ENCODE measurements at regions of chr2 and their contacts with region 1.

Region 1: GRCh38 chr2:15577071-15577735 is 14.5 kb upstream of the DDX1 start:
- DNase-seq: peak; percentile 67 to 85 (median 81)
- ATAC-seq: peak; percentile 98
- H3K4me3 ChIP-seq: no peak overlapping the region
- H3K4me3 Mint-ChIP-seq: no peak overlapping the region
- H3K27ac ChIP-seq: no peak overlapping the region
- H3K27ac Mint-ChIP-seq: no peak overlapping the region
- H3K4me1 ChIP-seq: no peaks in the 10 kb centered on the region
- H3K4me1 Mint-ChIP-seq: no peaks in the 10 kb centered on the region
- H3K27me3 ChIP-seq: no peaks in the 10 kb centered on the region
- H3K27me3 Mint-ChIP-seq: peaks cover 0 to 5% (median 0%) of the 10 kb centered on the region in 5 donors

Region 2: DNA sequence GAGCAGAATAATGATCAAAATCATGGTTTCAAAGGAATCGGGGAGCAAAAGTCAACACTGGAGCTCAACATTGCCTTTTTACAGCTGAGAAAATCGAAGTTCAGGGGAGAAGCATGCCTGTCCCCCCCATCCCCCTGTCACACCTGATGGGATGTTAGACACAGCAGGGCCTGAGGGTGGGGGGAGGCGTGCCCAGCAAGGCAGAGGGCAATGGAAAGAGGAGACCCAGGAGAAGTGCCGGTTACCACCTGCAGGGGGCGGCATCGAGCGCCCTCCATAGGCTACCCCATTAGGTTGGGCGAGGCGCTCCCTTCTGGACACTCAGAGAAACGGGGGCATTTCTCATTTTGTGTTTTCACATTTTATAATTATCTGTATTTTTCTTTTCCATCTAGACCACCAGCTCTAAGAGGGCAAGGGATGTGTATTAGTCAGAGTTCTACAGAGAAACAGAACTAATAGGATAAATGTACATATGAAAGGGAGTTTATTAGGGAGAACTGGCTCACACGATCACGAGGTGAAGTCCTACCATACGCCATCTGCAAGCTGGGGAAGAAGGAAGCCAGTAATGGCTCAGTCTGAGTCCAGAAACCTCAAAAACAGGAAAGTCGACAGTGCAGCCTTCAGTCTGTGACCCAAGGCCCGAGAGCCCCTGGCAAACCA is 673.4 kb before region 1 on chr2:
- CTCF ChIA-PET with region 1: no interaction called
- POLR2A ChIA-PET with region 1: no interaction called
- intact Hi-C with region 1: loop called in 1 of 2 experiments (anchors 1 kb)
- DNase-seq: peak in 4 of 9 donors; percentile 2 to 64 (median 7)
- ATAC-seq: peak; percentile 72
- H3K4me3 ChIP-seq: no peak overlapping the region
- H3K4me3 Mint-ChIP-seq: no peak overlapping the region
- H3K27ac ChIP-seq: no peak overlapping the region
- H3K27ac Mint-ChIP-seq: no peak overlapping the region
- H3K4me1 ChIP-seq: no peaks in the 10 kb centered on the region
- H3K4me1 Mint-ChIP-seq: no peaks in the 10 kb centered on the region
- H3K27me3 ChIP-seq: no peaks in the 10 kb centered on the region
- H3K27me3 Mint-ChIP-seq: peaks cover 0 to 13% (median 11%) of the 10 kb centered on the region in 5 donors

Region 3: DNA sequence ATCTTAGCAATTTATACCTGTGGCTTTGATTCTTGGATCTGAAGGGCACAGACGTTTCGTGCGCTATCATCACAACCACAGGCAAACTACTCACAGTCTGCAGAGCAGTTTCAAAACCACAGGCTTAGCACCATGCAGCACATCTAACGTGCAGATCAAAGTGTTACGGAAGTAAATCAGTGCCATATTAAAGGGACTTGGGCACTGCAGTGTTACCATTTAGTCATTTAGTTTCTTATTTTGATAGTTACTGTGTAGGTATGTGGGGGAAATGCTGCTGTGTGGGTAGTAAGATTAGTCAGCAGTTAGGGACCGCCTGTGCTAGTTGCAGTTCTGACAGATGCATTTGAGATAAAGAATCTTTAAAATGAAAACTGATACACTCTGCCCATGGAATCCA is 400.1 kb before region 1 on chr2:
- CTCF ChIA-PET with region 1: no interaction called
- POLR2A ChIA-PET with region 1: no interaction called
- intact Hi-C with region 1: loop called in 1 of 2 experiments (anchors 5 kb)
- DNase-seq: peak in 8 of 9 donors; percentile 40 to 78 (median 62)
- ATAC-seq: peak; percentile 93
- H3K4me3 ChIP-seq: no peak overlapping the region
- H3K4me3 Mint-ChIP-seq: peak overlapping the region in 9 of 10 donors; percentile 8 to 53 (median 40)
- H3K27ac ChIP-seq: no peak overlapping the region
- H3K27ac Mint-ChIP-seq: peak overlapping the region; percentile 26 to 83 (median 54)
- H3K4me1 ChIP-seq: peaks cover 0 to 25% of the 10 kb centered on the region in 2 donors
- H3K4me1 Mint-ChIP-seq: peaks cover 19 to 46% (median 36%) of the 10 kb centered on the region in 7 donors
- H3K27me3 ChIP-seq: no peaks in the 10 kb centered on the region
- H3K27me3 Mint-ChIP-seq: no peaks in the 10 kb centered on the region

Region 4: DNA sequence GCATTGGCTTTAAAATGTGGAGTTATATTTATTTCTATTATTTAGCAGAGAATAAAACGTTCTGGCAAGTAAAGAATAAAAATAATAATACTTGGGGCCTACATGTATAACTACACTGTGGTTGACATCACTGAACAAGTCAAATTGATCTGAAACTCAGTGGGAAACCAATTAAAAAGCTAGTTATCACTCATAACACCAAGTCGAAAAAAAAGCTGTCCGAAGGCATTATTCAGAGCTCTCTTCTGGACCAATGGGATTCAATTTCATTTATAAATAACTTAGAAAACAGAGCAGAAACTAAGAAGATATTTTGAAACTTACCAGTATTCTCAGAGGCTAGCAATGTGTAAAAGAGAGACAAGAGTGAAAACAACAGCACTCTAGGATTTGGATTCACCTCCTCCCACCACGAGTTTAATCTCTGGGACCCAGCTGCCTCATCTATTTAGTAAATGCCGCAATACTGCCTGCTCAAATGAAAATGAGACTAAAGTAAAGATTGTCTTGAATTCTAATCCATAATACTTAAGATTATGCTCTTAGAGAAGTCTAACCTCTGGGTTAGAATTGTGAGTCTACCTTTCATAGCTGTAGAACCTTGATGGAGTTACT is 144.5 kb before region 1 on chr2:
- CTCF ChIA-PET with region 1: no interaction called
- POLR2A ChIA-PET with region 1: no interaction called
- intact Hi-C with region 1: loop called in 1 of 2 experiments (anchors 5 kb)
- DNase-seq: no peak
- ATAC-seq: no peak
- H3K4me3 ChIP-seq: no peak overlapping the region
- H3K4me3 Mint-ChIP-seq: no peak overlapping the region
- H3K27ac ChIP-seq: no peak overlapping the region
- H3K27ac Mint-ChIP-seq: no peak overlapping the region
- H3K4me1 ChIP-seq: no peaks in the 10 kb centered on the region
- H3K4me1 Mint-ChIP-seq: peaks cover 0 to 12% (median 2%) of the 10 kb centered on the region in 7 donors
- H3K27me3 ChIP-seq: no peaks in the 10 kb centered on the region
- H3K27me3 Mint-ChIP-seq: no peaks in the 10 kb centered on the region

Region 5: DNA sequence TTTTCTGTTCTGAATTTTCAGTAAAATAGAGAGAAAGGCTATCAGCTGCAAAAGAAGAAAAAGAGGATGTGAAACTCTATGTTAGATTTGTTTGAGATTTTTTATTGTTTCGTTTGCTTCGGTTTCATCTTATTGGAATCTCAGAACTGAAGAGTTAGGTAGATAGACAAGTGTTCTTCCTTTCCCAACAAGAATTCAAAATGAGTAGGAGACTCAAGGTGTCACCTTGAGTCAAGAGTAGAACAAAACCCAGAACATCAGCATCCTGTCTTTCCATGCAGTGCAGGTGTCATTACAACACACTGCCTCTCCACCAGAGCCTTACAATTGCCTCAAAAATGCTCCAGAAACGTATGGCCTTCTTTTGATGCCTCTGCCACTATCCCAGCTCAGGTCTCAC is 37.2 kb before region 1 on chr2:
- CTCF ChIA-PET with region 1: no interaction called
- POLR2A ChIA-PET with region 1: no interaction called
- intact Hi-C with region 1: loop called in 1 of 2 experiments (anchors 5 kb)
- DNase-seq: no peak
- ATAC-seq: no peak
- H3K4me3 ChIP-seq: no peak overlapping the region
- H3K4me3 Mint-ChIP-seq: no peak overlapping the region
- H3K27ac ChIP-seq: no peak overlapping the region
- H3K27ac Mint-ChIP-seq: peak overlapping the region in 3 of 9 donors; percentile 10 to 63 (median 19)
- H3K4me1 ChIP-seq: no peaks in the 10 kb centered on the region
- H3K4me1 Mint-ChIP-seq: peaks cover 0 to 19% (median 4%) of the 10 kb centered on the region in 7 donors
- H3K27me3 ChIP-seq: no peaks in the 10 kb centered on the region
- H3K27me3 Mint-ChIP-seq: no peaks in the 10 kb centered on the region

Region 6: DNA sequence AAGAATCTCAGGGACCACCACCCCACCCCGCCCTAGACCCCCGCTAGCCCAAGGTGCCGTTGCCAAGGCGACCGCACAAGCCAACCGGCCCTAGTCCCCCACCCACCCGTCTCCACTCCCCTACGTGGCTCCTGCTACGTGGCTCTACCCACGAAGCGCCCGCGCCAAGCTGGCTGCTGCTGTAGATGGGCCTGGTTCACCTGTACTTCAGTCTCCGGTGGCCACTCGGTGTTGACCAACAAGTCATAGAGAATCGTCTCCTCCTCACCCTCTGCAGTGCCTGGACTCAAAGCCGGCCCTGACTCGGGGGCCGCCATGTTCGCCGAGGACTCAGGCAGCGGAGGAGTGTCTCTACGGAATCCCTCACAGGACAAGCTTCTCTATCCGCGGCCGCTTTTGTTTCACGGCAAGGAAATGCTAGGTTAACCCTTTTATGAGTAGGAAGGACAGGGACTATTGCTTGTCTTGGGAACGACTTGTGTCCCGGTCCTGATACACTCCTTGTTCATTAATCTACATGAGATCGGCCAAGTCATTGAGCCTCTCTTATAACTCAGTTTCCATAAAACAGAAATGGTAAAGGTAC is 16.1 kb before region 1 on chr2 and contains the start of gene NBAS:
- CTCF ChIA-PET with region 1: interaction called, 5 read pairs
- POLR2A ChIA-PET with region 1: interaction called, 3 read pairs
- intact Hi-C with region 1: loop called (anchors 1 kb)
- DNase-seq: peak; percentile 50 to 79 (median 76)
- ATAC-seq: peak; percentile 93
- H3K4me3 ChIP-seq: peak within 1 kb of the TSS; percentile 61
- H3K4me3 Mint-ChIP-seq: peak within 1 kb of the TSS; percentile 88 to 100 (median 100)
- H3K27ac ChIP-seq: peak within 1 kb of the TSS; percentile 78
- H3K27ac Mint-ChIP-seq: peak within 1 kb of the TSS; percentile 93 to 99 (median 96)
- H3K4me1 ChIP-seq: peaks cover 4 to 17% of the 10 kb centered on the region in 2 donors
- H3K4me1 Mint-ChIP-seq: peaks cover 28 to 53% (median 45%) of the 10 kb centered on the region in 7 donors
- H3K27me3 ChIP-seq: no peaks in the 10 kb centered on the region
- H3K27me3 Mint-ChIP-seq: peaks cover 0 to 6% (median 0%) of the 10 kb centered on the region in 5 donors
- total RNA-seq, gene NBAS: 32.6 to 41.6 (median 36.4) TPM